Activated B cell treated with CpG ODN at 0.5 μM for 24 hours (primary cell): ENCODE measurements at regions of chr7 and their contacts with region 1.

Region 1: GRCh38 chr7:77536413-77537135 is 521 bp upstream of the PTPN12 start:
- DNase-seq: peak; percentile 96
- ATAC-seq: peak; percentile 88
- H3K4me3 Mint-ChIP-seq: peak overlapping the region; percentile 98
- H3K27ac Mint-ChIP-seq: peak overlapping the region; percentile 94
- H3K4me1 Mint-ChIP-seq: peaks cover 33% of the 10 kb centered on the region
- H3K27me3 Mint-ChIP-seq: no peaks in the 10 kb centered on the region
- CTCF ChIP-seq: no peak

Region 2: DNA sequence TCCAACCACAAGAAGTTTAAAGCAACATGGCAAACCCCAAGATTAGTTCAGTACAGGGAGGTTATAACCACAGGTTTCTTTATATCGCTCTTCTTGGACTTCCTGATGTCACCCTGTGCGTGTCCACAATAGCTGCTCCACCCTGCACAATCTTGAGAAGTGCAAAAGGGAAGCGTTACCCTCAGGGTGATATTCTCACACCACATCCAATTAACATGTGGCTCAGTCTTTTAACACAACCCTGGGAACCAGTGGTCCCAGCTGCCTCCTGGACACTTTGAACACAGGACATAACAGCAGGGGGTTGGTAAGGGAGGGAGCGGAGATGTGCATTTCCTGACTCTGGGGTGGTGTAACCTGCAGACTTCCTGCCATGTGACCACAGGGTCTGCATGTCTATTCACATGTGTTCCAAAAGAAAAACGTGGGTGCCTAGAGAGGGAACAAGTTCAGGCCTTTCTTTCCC is 185.0 kb before region 1 on chr7:
- CTCF ChIA-PET with region 1: no interaction called
- POLR2A ChIA-PET with region 1: interaction called, 5 read pairs
- intact Hi-C with region 1: loop called (anchors 1 kb)
- DNase-seq: peak; percentile 29
- ATAC-seq: peak; percentile 88
- H3K4me3 Mint-ChIP-seq: peak overlapping the region; percentile 75
- H3K27ac Mint-ChIP-seq: peak overlapping the region; percentile 96
- H3K4me1 Mint-ChIP-seq: peaks cover 41% of the 10 kb centered on the region
- H3K27me3 Mint-ChIP-seq: no peaks in the 10 kb centered on the region
- CTCF ChIP-seq: no peak

Region 3: GRCh38 chr7:77460057-77460486 is 76.5 kb before region 1 on chr7:
- CTCF ChIA-PET with region 1: no interaction called
- POLR2A ChIA-PET with region 1: no interaction called
- intact Hi-C with region 1: loop called (anchors 1 kb)
- DNase-seq: no peak
- ATAC-seq: no peak
- H3K4me3 Mint-ChIP-seq: no peak overlapping the region
- H3K27ac Mint-ChIP-seq: no peak overlapping the region
- H3K4me1 Mint-ChIP-seq: peaks cover 17% of the 10 kb centered on the region
- H3K27me3 Mint-ChIP-seq: no peaks in the 10 kb centered on the region
- CTCF ChIP-seq: no peak

Region 4: DNA sequence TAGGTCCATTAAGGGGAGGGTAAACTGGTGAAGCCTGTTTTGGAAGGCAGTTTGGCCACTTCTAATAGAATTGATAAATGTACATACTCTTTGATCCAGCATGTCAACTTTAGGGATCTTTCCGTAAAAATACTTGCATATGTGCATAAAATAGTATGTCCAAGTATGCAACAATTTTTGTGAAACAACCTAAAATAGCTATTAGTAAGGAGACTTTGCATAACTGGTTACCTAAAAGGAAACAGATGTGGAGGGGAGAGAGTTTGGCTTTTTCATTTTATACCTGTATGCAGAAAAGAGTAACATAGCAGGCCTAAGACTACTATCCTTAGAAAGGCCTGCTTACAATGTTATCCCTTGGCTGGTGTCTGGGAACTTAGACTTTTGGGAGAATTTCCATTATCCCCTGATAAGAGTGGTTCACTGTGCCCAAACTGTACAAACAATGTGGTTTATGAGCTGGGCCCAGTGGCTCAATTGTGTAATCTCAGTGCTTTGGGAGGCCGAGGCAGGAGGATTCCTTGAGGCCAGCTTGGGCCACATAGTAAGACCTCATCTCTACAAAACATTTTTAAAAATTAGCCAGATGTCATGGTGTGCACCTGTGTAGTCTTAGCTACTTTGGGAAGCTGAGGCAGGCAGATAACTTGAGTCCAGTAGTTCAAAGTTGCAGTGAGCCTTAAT is 21.9 kb after region 1 on chr7:
- CTCF ChIA-PET with region 1: no interaction called
- POLR2A ChIA-PET with region 1: interaction called, 6 read pairs
- intact Hi-C with region 1: loop called (anchors 2 kb)
- DNase-seq: no peak
- ATAC-seq: no peak
- H3K4me3 Mint-ChIP-seq: no peak overlapping the region
- H3K27ac Mint-ChIP-seq: peak overlapping the region; percentile 50
- H3K4me1 Mint-ChIP-seq: peaks cover 59% of the 10 kb centered on the region
- H3K27me3 Mint-ChIP-seq: no peaks in the 10 kb centered on the region
- CTCF ChIP-seq: no peak

Region 5: GRCh38 chr7:77759294-77759889 is 222.8 kb after region 1 on chr7:
- CTCF ChIA-PET with region 1: no interaction called
- POLR2A ChIA-PET with region 1: no interaction called
- intact Hi-C with region 1: loop called (anchors 5 kb)
- DNase-seq: no peak
- ATAC-seq: peak; percentile 64
- H3K4me3 Mint-ChIP-seq: no peak overlapping the region
- H3K27ac Mint-ChIP-seq: peak overlapping the region; percentile 50
- H3K4me1 Mint-ChIP-seq: peaks cover 52% of the 10 kb centered on the region
- H3K27me3 Mint-ChIP-seq: no peaks in the 10 kb centered on the region
- CTCF ChIP-seq: peak; percentile 22